ENCODE measurements at regions of chr7 and their contacts with region 1.

Region 1: GRCh38 chr7:12623897-12624498 is 53.5 kb downstream of the SCIN start:
- DNase-seq: no peak
- H3K4me3 Mint-ChIP-seq: no peak overlapping the region
- H3K27ac Mint-ChIP-seq: no peak overlapping the region
- H3K4me1 Mint-ChIP-seq: peaks cover 5% of the 10 kb centered on the region
- H3K27me3 Mint-ChIP-seq: peaks cover 18% of the 10 kb centered on the region

Region 2: GRCh38 chr7:12524794-12525386 is 99.1 kb before region 1 on chr7:
- intact Hi-C with region 1: loop called (anchors 1 kb)
- DNase-seq: no peak
- H3K4me3 Mint-ChIP-seq: no peak overlapping the region
- H3K27ac Mint-ChIP-seq: no peak overlapping the region
- H3K4me1 Mint-ChIP-seq: no peaks in the 10 kb centered on the region
- H3K27me3 Mint-ChIP-seq: peaks cover 7% of the 10 kb centered on the region

Region 3: DNA sequence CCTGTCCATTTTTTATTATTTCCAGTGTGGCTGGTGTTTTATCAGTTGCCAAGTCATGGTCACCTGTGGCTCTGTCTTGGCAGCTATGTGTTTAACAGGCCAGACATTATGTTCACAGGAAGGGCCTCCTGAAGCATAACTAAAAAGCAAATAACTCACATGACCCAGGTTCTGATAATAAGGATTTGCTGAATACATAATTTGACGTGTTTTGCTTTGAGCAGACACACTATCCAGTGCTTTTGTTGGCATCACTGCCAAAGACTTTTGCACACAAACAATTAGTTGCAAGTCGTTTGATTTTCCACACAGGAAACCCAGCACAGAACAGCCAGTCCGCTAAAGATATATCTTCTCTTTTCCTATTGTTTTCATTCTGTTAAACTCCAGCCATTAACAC is 237.1 kb after region 1 on chr7:
- intact Hi-C with region 1: no loop called
- DNase-seq: no peak
- H3K4me3 Mint-ChIP-seq: no peak overlapping the region
- H3K27ac Mint-ChIP-seq: no peak overlapping the region
- H3K4me1 Mint-ChIP-seq: no peaks in the 10 kb centered on the region
- H3K27me3 Mint-ChIP-seq: no peaks in the 10 kb centered on the region